ENCODE measurements at regions of chr4 and their contacts with region 1.

Region 1: DNA sequence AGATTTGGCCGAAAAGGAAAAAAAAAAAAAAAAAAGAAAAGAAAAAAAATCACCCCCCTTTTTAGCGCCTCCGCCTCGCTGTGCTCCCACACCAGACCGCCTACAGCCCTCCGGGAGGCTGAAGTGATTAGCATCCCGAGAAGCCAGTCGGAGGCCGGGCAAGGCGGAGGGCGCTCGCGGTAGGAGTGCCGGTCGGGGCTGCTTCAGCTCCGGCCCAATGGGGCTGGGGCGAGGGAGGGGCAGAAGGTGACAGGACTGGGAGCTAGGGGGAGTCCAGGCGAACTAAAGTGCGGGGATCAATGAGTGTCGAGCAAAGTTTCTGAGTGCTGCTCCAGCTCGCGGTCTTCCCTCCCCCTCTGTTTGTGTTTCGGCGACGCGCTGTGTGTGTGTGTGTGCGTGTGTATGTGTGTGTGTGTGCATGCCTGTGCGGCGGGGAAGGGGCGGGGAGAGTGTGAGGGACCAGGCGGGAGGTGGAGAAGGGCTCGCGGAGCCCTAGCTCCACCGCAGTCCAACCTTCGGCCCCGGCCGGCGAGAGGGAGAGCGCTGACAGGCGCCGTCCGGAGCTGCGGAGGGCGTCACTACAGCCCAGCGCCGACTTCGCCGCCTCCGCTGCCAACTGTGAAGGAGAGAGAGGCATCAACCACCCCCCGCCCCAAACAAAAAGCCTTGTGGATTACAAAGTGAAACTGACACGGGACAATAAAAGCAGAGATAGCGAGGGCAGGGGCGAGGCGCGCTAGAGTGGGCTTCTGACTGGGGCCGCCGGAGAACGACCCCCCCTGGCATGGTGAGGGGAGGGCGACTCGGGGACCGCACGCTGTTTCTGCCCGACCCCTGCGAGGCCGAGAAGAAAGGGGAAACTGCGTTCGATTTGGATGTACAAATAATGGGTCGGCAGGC is at the start of gene FAT4:
- DNase-seq: peak; percentile 73 to 89
- ATAC-seq: peak; percentile 80
- total RNA-seq, gene FAT4: 1.4 to 6.1 TPM

Region 2: DNA sequence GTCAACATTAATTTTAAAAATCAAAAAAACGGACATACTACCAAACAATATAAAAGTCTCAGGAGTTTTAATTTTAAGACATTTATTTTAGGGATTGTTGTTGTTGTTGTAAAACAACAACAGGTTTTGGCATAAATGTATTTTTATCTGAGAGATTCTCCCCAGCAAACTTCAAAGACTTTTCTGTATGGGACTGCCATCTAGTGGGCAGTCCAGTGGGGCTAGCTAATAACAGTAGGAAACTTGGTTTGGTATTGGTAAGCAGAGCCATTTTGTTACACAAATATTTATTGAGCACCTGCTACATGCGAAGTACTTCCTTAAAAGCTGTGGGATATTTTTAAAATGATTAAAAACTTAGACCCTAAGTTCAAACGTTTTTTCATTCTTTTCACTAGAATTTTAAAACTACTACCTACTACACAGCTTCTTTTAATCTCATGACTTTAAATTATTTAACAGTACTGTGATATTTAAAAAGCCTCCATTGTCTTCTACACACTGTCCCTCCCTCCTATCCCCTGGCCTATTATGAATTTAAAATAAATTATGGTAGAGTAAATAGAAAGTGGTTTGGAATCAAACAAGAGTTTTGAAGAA is 1289.4 kb after region 1 on chr4:
- intact Hi-C with region 1: loop called in 1 of 2 experiments (anchors 10 kb)
- DNase-seq: no peak
- ATAC-seq: no peak

Measured in left colon (tissue), 2 donors.